Endothelial cell of umbilical vein (primary cell): ENCODE measurements at regions of chr15 and their contacts with region 1.

Region 1: GRCh38 chr15:59247364-59247763 is 40.7 kb downstream of the LDHAL6B start:
- DNase-seq: peak; percentile 84
- H3K4me3 ChIP-seq: no peak overlapping the region
- H3K27ac ChIP-seq: no peak overlapping the region
- H3K4me1 ChIP-seq: peaks cover 3% of the 10 kb centered on the region
- H3K27me3 ChIP-seq: no peaks in the 10 kb centered on the region
- CTCF ChIP-seq: peak; percentile 64 to 68
- POLR2A ChIP-seq: no peak

Region 2: DNA sequence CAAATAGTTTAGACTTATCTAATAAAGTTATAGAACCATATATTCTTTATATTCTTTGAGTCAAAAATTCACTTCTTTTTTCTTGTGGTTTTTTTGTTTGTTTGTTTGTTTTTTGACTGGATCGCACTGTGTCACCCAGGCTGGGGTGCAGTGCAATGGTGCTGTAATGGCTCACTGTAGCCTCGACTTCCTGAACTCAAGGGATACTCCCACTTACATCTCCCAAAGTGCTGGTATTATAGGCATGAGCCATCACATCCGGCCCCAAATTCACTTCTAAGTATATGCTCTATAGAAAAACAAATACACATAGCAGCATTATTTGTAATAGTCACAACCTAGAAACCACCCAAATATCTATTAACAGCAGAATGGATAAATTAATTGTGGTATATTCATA is 300.2 kb before region 1 on chr15:
- CTCF ChIA-PET with region 1: no interaction called
- POLR2A ChIA-PET with region 1: no interaction called
- dilution Hi-C with region 1: no loop called
- intact Hi-C with region 1: no loop called
- DNase-seq: no peak
- H3K4me3 ChIP-seq: no peak overlapping the region
- H3K27ac ChIP-seq: no peak overlapping the region
- H3K4me1 ChIP-seq: peaks cover 7% of the 10 kb centered on the region
- H3K27me3 ChIP-seq: no peaks in the 10 kb centered on the region
- CTCF ChIP-seq: no peak
- POLR2A ChIP-seq: no peak

Region 3: DNA sequence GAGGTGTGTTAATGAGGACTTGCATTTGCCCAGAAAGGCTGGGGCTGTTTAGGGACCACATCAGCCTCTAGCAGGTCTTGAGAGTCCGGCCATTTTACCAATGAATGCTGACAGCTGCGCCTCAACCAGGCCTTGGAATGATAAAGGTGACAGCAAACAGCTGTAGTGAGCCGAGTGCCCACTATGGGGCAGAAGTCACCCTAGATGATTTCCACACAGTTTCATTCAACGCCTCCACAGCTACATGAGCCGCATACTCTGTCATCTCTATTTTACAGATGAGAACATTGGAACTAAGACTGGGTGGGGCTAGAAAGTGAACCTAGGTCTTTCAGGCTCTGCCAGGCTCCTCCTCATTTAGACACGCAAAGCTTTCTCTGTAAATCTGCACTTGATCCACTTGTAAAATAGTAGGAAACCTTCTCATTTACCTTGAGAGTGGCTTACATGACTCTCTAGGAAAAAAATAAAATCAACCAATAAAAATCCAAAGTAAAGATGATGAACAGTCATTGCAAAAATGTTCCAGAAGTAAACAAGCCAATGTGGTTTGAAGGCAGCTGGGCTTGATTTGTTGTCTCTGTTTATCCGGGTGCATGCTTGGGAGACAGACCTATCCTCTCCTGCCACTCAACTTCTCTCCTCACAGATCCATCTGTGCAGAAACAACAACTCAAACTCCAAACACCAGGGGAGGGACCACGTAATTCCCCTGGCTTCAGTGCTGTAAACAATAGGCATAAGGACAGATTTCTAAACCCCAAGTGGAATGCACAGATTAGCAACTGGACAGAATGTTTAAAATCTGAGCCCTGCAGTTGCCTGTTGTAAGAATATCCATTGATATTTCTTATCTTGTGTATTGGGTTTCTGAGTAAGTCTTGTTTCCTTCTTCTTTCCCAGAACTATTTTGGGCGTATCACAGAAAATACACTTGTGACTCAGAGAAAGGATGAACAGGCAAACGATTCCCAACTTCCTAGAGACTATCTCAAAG is 72.2 kb before region 1 on chr15:
- CTCF ChIA-PET with region 1: interaction called, 12 read pairs
- POLR2A ChIA-PET with region 1: no interaction called
- dilution Hi-C with region 1: no loop called
- intact Hi-C with region 1: no loop called
- DNase-seq: peak; percentile 75
- H3K4me3 ChIP-seq: no peak overlapping the region
- H3K27ac ChIP-seq: peak overlapping the region; percentile 62
- H3K4me1 ChIP-seq: peaks cover 29% of the 10 kb centered on the region
- H3K27me3 ChIP-seq: no peaks in the 10 kb centered on the region
- CTCF ChIP-seq: peak; percentile 64 to 70
- POLR2A ChIP-seq: no peak

Region 4: GRCh38 chr15:59299929-59300617 is 52.7 kb after region 1 on chr15:
- CTCF ChIA-PET with region 1: interaction called, 21 read pairs
- POLR2A ChIA-PET with region 1: no interaction called
- dilution Hi-C with region 1: no loop called
- intact Hi-C with region 1: loop called (anchors 5 kb)
- DNase-seq: peak; percentile 94
- H3K4me3 ChIP-seq: peak overlapping the region in 1 of 3 experiments; percentile 28
- H3K27ac ChIP-seq: peak overlapping the region; percentile 78
- H3K4me1 ChIP-seq: peaks cover 54% of the 10 kb centered on the region
- H3K27me3 ChIP-seq: no peaks in the 10 kb centered on the region
- CTCF ChIP-seq: no peak
- POLR2A ChIP-seq: no peak

Region 5: DNA sequence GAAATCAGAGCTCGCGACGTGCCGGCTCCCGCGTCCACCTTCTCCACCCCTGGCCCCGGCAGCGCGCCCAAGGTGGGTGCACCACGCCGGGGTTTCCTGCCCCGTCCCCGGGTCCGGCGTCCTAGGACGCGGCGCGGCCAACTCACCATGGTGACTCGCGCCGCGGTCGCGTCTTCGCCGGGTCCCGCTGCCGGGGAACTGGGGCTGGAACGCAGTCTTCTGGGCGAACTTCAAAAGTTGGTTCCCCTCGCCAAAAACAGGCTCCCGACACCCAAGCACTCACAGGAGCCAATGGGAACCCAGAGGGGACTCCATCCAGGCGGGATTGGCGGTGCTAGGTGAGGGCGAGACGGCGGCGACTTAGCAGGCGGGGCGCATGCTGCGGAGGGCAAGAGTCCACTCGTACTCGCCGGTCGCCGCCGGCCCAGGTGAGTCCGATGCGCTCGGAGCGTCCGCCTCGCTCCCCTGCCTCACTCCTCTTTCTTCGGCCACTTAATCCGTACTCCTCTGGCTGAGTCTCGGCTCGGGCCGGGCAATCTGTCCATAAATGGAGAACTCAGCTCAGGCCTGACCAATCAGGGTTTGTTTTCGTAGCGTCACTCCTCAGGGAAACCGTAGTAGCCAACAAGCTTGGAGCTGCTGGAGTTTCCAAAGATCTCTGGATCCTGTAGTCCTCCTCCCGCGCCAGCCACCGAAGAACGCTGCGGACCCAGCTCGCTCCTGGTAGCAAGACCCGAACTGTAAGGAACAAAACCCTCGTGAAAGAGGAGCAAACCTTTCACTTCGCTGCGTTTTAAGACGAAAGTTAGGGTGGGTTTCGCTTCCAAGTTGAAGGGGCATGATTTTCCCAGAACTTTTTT is 125.2 kb after region 1 on chr15 and contains the start of gene MYO1E:
- CTCF ChIA-PET with region 1: interaction called, 18 read pairs
- POLR2A ChIA-PET with region 1: interaction called, 10 read pairs
- dilution Hi-C with region 1: no loop called
- intact Hi-C with region 1: loop called (anchors 1 kb)
- DNase-seq: peak; percentile 98
- H3K4me3 ChIP-seq: peak within 1 kb of the TSS; percentile 85 to 91 (median 88)
- H3K27ac ChIP-seq: peak within 1 kb of the TSS; percentile 82
- H3K4me1 ChIP-seq: peaks cover 27% of the 10 kb centered on the region
- H3K27me3 ChIP-seq: no peaks in the 10 kb centered on the region
- CTCF ChIP-seq: no peak
- POLR2A ChIP-seq: peak; percentile 97
- total RNA-seq, gene MYO1E: 218 and 231 TPM in 2 replicates

Region 6: GRCh38 chr15:59492389-59493377 is 245.3 kb after region 1 on chr15:
- CTCF ChIA-PET with region 1: interaction called, 34 read pairs
- POLR2A ChIA-PET with region 1: no interaction called
- dilution Hi-C with region 1: no loop called
- intact Hi-C with region 1: loop called (anchors 1 kb)
- DNase-seq: peak; percentile 73
- H3K4me3 ChIP-seq: no peak overlapping the region
- H3K27ac ChIP-seq: no peak overlapping the region
- H3K4me1 ChIP-seq: no peaks in the 10 kb centered on the region
- H3K27me3 ChIP-seq: no peaks in the 10 kb centered on the region
- CTCF ChIP-seq: peak; percentile 68 to 86
- POLR2A ChIP-seq: no peak

Region 7: DNA sequence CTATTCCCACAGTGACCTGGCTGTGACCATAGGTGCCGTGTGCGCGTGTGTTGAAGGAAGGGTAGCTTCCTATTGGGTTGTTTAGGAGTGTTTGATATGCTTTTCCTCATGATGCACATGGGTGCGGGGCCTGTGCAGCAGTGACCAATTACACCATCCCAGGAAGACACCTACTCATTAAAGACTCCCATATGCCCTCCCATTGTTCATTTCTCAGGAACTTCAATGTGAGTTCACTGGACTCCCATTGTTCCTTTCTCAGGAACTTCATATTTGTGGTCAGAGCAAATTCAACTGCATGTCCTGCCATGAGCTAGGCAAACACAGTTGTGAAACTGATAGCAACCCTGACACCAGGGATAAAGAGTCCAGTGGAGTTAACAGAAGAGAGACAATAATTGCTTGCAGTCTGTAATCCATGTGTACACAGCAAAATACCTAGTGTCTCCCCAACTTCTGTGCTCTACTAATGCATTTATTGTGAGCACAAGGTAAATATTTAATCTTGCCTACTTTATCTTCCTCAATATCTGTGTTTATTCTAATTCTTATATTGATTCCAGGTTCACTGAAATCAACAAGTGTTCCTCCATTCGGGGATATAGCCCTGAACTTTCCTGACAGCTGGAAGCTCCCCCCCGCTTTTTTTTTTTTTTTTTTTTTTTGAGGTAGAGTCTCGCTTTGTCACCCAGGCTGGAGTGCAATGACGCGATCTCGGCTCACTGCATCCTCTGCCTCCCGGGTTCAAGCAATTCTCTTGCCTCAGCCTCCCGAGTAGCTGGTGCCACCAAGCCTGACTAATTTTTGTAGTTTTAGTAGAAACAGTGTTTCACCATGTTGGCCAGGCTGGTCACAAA is 306.7 kb after region 1 on chr15:
- CTCF ChIA-PET with region 1: no interaction called
- POLR2A ChIA-PET with region 1: no interaction called
- dilution Hi-C with region 1: no loop called
- intact Hi-C with region 1: no loop called
- DNase-seq: peak; percentile 32
- H3K4me3 ChIP-seq: no peak overlapping the region
- H3K27ac ChIP-seq: no peak overlapping the region
- H3K4me1 ChIP-seq: no peaks in the 10 kb centered on the region
- H3K27me3 ChIP-seq: peaks cover 0 to 2% of the 10 kb centered on the region in 2 experiments
- CTCF ChIP-seq: no peak
- POLR2A ChIP-seq: no peak